ENCODE measurements at regions of chr9 and their contacts with region 1.

Region 1: DNA sequence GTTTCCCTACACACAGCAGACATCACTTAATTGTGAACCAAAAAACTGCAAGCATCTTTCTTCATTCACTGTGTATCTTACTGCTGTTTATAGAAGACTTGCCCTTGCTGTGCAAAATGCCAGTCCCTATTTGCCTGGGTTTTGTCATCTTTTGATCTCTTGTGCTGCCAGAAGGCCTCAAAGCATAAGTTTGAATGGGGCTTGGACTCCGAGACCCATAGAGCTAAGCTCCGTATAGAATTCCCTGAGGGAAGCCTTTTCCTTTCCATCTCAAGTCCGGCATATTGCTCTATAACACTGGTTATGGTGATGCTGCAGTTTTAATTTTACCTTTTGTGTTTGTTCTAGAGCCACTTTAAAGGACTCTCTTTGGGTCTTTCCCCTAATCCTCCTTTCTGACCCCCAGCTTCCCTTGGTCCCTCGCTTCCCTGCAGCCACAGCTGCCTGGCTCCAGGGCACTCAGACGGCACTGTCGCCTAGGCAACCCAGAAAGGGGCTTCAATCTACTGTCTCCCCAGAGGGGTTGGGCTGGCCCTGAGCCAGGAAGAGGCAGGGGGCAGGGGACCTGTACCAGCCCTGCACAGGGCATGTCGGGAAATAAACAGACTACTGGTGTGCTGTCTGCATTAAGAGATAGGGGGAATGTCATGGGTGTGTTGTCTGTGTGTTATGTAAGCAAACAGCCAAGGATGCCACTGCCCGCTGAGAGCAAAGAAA is 73.4 kb upstream of the MELK start:
- DNase-seq: no peak
- H3K4me3 Mint-ChIP-seq: no peak overlapping the region
- H3K27ac Mint-ChIP-seq: no peak overlapping the region
- H3K4me1 Mint-ChIP-seq: peaks cover 39% of the 10 kb centered on the region
- H3K27me3 Mint-ChIP-seq: no peaks in the 10 kb centered on the region

Region 2: GRCh38 chr9:37293664-37294524 is 794.6 kb after region 1 on chr9:
- CTCF ChIA-PET with region 1: no interaction called
- intact Hi-C with region 1: loop called (anchors 10 kb)
- DNase-seq: no peak
- H3K4me3 Mint-ChIP-seq: no peak overlapping the region
- H3K27ac Mint-ChIP-seq: peak overlapping the region; percentile 81
- H3K4me1 Mint-ChIP-seq: peaks cover 72% of the 10 kb centered on the region
- H3K27me3 Mint-ChIP-seq: no peaks in the 10 kb centered on the region

Measured in activated naive CD4-positive, alpha-beta T cell treated with anti-CD3 and anti-CD28 coated beads for 36 hours (primary cell).